Activated CD4-positive, alpha-beta T cell treated with anti-CD3 and anti-CD28 coated beads for 36 hours (primary cell): ENCODE measurements at regions of chr20 and their contacts with region 1.

Region 1: GRCh38 chr20:44609511-44610312 is 27.3 kb downstream of the PKIG start:
- DNase-seq: peak; percentile 91
- ATAC-seq: peak; percentile 96
- H3K4me3 Mint-ChIP-seq: peak overlapping the region; percentile 24
- H3K27ac Mint-ChIP-seq: peak overlapping the region; percentile 84
- H3K4me1 Mint-ChIP-seq: peaks cover 18% of the 10 kb centered on the region
- H3K27me3 Mint-ChIP-seq: no peaks in the 10 kb centered on the region

Region 2: GRCh38 chr20:44217342-44218092 is 392.2 kb before region 1 on chr20:
- CTCF ChIA-PET with region 1: interaction called, 21 read pairs
- POLR2A ChIA-PET with region 1: interaction called, 7 read pairs
- intact Hi-C with region 1: loop called (anchors 1 kb)
- DNase-seq: peak; percentile 82
- ATAC-seq: peak; percentile 46
- H3K4me3 Mint-ChIP-seq: peak overlapping the region; percentile 65
- H3K27ac Mint-ChIP-seq: peak overlapping the region; percentile 83
- H3K4me1 Mint-ChIP-seq: peaks cover 50% of the 10 kb centered on the region
- H3K27me3 Mint-ChIP-seq: no peaks in the 10 kb centered on the region

Region 3: DNA sequence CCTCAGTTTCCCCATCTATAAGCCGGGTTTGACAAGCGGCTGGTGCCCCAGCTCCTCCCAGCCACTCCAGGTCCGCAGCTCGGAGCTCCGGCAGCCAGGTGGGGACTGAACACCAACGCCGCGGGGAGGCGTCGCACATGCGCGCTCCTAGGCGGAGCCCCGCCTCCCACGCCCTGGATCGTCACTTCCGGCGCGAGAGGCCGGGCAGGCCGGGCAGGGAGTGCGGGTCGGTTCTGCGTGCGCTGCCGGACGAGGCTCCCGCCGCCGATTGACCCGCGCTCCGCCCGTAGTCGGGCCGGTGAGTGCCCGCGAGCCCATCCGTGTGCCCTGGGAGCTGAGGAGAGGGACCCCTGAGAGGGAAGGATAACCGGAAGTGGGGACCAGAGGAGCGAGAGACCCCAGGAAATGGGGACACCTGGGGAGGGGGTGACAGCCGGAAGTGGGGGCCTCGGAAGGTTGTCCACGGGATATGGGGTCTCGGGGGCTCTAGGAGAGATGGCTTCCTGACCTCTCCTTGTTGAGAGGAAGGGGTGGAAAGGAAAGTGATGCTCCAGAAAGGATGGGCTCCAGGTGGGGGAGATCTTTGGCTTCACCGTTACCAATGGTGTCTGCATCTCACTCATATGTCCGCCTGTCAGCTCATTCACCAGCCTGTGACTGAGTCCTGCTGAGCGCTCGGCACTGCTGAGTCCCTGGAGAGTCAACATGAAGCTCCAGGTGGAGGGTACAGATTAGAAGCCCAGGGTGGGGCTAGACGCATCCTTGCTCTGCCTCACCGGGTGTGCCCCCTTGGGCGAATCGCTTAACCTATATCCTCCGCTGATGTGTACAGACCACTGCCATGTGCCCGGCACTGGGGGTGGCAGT is 133.8 kb before region 1 on chr20 and contains the start of gene TTPAL:
- CTCF ChIA-PET with region 1: interaction called, 7 read pairs
- POLR2A ChIA-PET with region 1: no interaction called
- intact Hi-C with region 1: loop called (anchors 1 to 5 kb)
- DNase-seq: peak; percentile 96
- ATAC-seq: peak; percentile 97
- H3K4me3 Mint-ChIP-seq: peak within 1 kb of the TSS; percentile 91
- H3K27ac Mint-ChIP-seq: peak within 1 kb of the TSS; percentile 97
- H3K4me1 Mint-ChIP-seq: peaks cover 22% of the 10 kb centered on the region
- H3K27me3 Mint-ChIP-seq: no peaks in the 10 kb centered on the region
- total RNA-seq, gene TTPAL: 18.3 to 21.5 TPM

Region 4: GRCh38 chr20:44521484-44522481 is 87.9 kb before region 1 on chr20 and contains the start of gene SERINC3:
- CTCF ChIA-PET with region 1: interaction called, 8 read pairs
- POLR2A ChIA-PET with region 1: no interaction called
- intact Hi-C with region 1: loop called (anchors 2 kb)
- DNase-seq: peak; percentile 98
- ATAC-seq: peak; percentile 99
- H3K4me3 Mint-ChIP-seq: peak within 1 kb of the TSS; percentile 81
- H3K27ac Mint-ChIP-seq: peak within 1 kb of the TSS; percentile 93
- H3K4me1 Mint-ChIP-seq: peaks cover 55% of the 10 kb centered on the region
- H3K27me3 Mint-ChIP-seq: no peaks in the 10 kb centered on the region
- total RNA-seq, gene SERINC3: 51.9 to 58.5 TPM

Region 5: GRCh38 chr20:44576297-44576696 is 33.4 kb before region 1 on chr20:
- CTCF ChIA-PET with region 1: interaction called, 7 read pairs
- POLR2A ChIA-PET with region 1: interaction called, 3 read pairs
- intact Hi-C with region 1: loop called in 1 of 2 experiments (anchors 1 kb)
- DNase-seq: peak; percentile 34
- ATAC-seq: peak; percentile 40
- H3K4me3 Mint-ChIP-seq: no peak overlapping the region
- H3K27ac Mint-ChIP-seq: no peak overlapping the region
- H3K4me1 Mint-ChIP-seq: peaks cover 17% of the 10 kb centered on the region
- H3K27me3 Mint-ChIP-seq: peaks cover 2% of the 10 kb centered on the region

Region 6: GRCh38 chr20:44582311-44583025 is 27.2 kb before region 1 on chr20 and contains the start of gene PKIG:
- CTCF ChIA-PET with region 1: interaction called, 10 read pairs
- POLR2A ChIA-PET with region 1: no interaction called
- intact Hi-C with region 1: no loop called
- DNase-seq: no peak
- ATAC-seq: no peak
- H3K4me3 Mint-ChIP-seq: no peak within 1 kb of the TSS
- H3K27ac Mint-ChIP-seq: no peak within 1 kb of the TSS
- H3K4me1 Mint-ChIP-seq: peaks cover 1% of the 10 kb centered on the region
- H3K27me3 Mint-ChIP-seq: peaks cover 2% of the 10 kb centered on the region
- total RNA-seq, gene PKIG: 4.5 to 4.6 TPM

Region 7: DNA sequence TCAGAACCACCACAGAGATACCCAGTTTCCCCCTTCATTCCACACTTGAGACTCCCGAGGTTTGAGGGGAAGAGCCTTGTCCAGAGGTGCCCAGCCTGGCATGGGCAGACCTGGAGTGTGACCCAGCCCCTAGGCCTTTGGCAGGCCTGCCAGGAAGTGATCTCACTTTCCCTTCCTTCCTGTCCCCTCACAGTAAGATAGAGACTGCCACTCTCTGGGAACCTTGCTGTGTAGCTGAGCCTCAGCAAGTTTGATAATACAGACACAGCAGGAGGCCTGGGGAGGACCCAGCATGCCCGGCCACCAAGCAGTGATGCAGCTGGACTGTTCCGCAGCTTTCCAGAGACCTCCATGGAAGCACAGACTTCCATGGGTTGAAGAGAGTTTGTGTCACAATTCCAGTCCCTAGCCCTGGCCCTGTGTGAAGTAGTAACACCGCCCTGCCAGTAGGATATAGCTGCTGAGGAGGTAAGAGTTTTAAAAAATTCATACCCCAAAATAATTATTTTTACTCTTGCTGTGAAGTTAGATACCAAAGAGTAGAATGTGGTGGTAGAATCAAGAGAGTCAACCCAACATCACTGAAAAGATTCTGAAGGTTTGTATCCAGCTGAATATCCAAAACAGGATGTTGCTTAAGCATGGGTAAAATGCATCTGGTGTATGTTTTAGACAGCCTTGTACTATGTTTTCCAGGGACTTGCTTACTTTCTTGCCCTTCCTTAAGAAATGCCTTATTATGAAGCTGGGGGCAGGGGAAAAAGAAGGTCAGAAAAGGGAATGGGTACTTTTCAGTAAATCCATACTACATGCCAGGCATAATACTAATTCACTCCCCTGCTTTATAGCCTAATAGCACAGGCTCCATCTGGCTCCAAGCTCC is 11.0 kb before region 1 on chr20:
- CTCF ChIA-PET with region 1: interaction called, 32 read pairs
- POLR2A ChIA-PET with region 1: interaction called, 3 read pairs
- intact Hi-C with region 1: no loop called
- DNase-seq: peak; percentile 27
- ATAC-seq: peak; percentile 83
- H3K4me3 Mint-ChIP-seq: peak overlapping the region; percentile 64
- H3K27ac Mint-ChIP-seq: peak overlapping the region; percentile 76
- H3K4me1 Mint-ChIP-seq: peaks cover 17% of the 10 kb centered on the region
- H3K27me3 Mint-ChIP-seq: no peaks in the 10 kb centered on the region